ENCODE measurements at regions of chr6 and their contacts with region 1.

Region 1: GRCh38 chr6:150735341-150735851 is 130.1 kb upstream of the MTHFD1L start:
- DNase-seq: no peak

Region 2: DNA sequence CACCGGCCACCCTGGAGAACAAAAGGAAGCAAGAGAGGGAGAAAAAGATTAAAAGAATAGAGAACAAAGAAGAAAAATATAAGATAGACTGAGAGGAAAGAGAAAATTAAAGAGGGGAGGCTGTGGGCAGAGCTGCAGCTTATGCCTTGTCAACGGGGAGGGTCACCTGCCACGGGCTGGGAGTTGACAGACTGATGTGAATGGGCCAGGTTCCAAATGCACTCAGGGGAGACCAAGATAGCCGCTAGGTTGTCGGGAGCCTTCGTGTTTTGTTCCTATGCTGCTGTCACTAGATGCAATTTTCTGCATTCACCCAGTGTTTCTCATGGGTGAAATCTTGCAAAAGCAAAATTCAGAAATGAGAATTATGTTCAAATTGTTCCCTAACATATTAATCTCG is 10.5 kb after region 1 on chr6:
- intact Hi-C with region 1: loop called in 1 of 2 experiments (anchors 1 kb)
- DNase-seq: no peak

Measured in posterior vena cava (tissue), 2 donors.